ENCODE measurements at regions of chr18 and their contacts with region 1.

Region 1: GRCh38 chr18:63199743-63200241 is 119.8 kb downstream of the BCL2 start:
- DNase-seq: peak; percentile 60
- H3K4me3 Mint-ChIP-seq: no peak overlapping the region
- H3K27ac Mint-ChIP-seq: no peak overlapping the region
- H3K4me1 Mint-ChIP-seq: peaks cover 25% of the 10 kb centered on the region
- H3K27me3 Mint-ChIP-seq: no peaks in the 10 kb centered on the region

Region 2: DNA sequence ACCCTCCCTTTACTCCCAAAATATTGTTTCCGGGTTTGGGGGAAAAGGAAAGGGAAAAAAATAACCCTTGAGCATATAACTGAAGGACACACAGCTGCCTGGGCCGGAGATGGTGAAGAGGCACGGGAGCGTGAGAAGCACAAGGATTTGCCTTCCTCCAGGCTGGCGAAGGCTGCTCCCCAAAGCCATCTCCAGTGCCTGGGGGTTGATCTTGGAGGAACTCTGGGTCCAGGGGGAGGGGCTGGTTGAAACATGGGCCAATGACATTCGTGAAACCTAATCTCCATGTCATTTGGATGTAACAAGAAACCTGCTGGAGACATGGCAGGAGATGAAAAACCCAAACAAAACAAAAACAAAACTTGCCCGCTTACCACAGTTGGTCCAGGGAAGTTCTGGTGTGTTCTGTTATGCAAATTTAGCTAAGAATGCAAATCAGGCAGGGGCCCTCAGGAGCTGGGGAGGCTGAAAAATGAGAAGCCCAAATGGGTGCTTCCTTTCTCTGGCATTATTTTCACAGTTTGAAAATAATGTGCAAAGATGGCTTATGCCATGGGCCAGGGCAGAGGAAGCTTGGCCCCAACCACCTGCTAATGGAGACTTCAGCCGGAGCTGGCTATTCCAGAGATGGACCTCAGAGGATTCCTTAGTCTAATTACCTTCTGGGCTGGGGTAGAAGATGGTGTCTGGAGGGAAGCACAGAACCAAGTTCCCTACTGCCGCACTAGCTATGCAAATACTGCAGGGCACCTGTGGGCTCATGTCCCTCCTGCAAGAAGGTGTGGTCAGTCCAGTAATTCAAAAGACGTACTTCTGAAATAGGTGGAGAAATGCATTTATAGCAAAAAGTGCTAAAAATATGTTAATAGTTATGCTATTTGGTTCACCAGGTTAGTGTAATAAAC is 61.1 kb before region 1 on chr18:
- intact Hi-C with region 1: loop called (anchors 2 kb)
- DNase-seq: no peak
- H3K4me3 Mint-ChIP-seq: peak overlapping the region; percentile 73
- H3K27ac Mint-ChIP-seq: peak overlapping the region; percentile 90
- H3K4me1 Mint-ChIP-seq: peaks cover 71% of the 10 kb centered on the region
- H3K27me3 Mint-ChIP-seq: no peaks in the 10 kb centered on the region

Region 3: DNA sequence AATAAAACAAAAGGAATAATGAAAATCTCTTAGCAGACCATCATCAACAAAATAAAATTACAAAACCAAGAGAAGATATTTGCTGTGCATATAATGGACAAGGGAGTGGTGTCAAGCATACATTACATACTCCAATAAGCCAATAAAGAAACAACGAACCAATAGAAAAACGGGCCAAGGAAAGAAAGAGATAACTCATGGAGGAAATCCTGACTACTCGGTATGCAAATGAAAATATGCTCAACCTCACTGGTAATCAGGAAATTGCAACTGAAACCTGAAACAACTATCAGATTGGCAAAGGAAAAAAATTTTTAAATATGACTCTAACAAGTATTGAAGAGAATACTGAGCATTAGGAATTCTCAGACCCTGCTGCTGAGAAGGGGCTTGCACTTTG is 35.0 kb after region 1 on chr18:
- intact Hi-C with region 1: loop called (anchors 1 kb)
- DNase-seq: no peak
- H3K4me3 Mint-ChIP-seq: peak overlapping the region; percentile 2
- H3K27ac Mint-ChIP-seq: peak overlapping the region; percentile 70
- H3K4me1 Mint-ChIP-seq: peaks cover 76% of the 10 kb centered on the region
- H3K27me3 Mint-ChIP-seq: no peaks in the 10 kb centered on the region

Region 4: DNA sequence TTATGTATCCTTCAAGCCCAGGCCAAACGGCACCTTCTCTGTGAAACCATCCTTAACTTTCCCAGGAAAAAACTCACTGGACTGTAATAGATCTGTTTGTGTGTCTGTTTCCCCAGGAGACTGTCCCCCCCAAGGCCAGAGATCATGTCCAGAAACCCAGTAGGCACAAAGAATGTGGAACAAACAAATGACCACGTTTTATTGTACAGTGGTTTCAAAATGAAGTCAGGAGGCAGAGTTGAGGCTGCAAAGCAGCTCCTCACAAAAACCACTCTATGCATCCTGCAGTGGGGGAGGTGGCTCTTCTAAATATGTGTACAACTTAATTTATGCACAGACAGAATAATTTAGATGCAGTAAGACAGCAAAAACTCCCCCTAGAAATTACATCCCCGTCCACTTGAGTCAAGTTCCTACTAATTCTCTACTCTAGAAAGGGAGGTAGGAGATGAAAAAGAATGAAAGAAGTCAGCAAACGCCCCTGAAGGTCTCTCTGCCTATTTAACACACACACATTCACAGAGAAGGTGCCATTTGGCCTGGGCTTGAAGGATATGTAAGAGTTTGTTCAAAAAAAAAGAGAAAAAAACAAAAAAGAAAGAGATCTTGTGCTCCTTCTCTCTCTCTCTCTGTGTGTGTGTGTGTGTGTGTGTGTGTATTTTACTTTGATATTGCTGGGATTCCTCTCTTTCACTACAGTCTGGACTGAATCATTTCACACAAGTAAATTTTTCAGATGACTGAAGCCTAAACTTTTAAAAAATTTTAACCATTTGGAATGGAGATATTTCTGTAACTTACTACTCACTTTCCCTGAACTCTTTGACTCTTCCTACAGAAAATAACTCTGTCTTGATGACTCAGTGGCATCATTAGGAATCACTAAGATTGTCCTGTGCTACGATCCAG is 100.3 kb after region 1 on chr18:
- intact Hi-C with region 1: loop called (anchors 1 kb)
- DNase-seq: no peak
- H3K4me3 Mint-ChIP-seq: peak overlapping the region; percentile 76
- H3K27ac Mint-ChIP-seq: peak overlapping the region; percentile 96
- H3K4me1 Mint-ChIP-seq: peaks cover 91% of the 10 kb centered on the region
- H3K27me3 Mint-ChIP-seq: no peaks in the 10 kb centered on the region

Measured in activated T-helper 1 cell treated with anti-CD3 and anti-CD28 coated beads, Interleukin-12 subunit alpha, Interleukin-12 subunit beta, Interleukin-2, Interleukin-4 antibody, amounts not matched to agents 30 ng/mL and 10 ng/mL and 1 ng/mL, durations not matched to agents 14 hours and 24 hours and 36 hours (primary cell).